ENCODE measurements at regions of chr15 and their contacts with region 1.

Region 1: GRCh38 chr15:22850055-22850454 is 11.6 kb downstream of the NIPA2 start:
- DNase-seq: no peak
- ATAC-seq: no peak
- H3K4me3 ChIP-seq: no peak overlapping the region
- H3K4me1 ChIP-seq: no peaks in the 10 kb centered on the region
- CTCF ChIP-seq: no peak

Region 2: DNA sequence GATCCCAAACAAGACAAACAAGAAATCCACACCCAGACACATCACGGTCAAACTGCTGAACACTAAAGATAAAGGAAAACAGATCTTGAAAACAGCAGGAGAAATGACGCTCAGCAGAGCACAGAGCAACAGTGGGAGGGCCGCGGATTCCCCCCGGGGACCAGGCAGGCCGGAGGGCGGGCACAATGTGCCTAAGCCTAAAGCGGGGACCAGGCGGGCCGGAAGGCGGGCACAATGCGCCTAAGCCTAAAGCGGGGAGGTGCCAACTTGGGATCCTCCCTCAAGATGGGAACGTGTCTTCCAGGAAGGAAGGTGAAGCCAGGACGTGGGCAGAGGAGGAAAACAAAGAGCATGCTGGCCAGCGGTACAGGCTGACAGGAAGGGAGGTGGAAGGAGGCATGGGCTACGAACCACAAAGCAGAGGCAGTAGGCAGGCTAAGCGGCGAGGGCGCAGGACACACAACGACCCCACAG is 99.1 kb after region 1 on chr15:
- intact Hi-C with region 1: no loop called
- DNase-seq: peak in 2 of 3 donors; percentile 57 to 61
- ATAC-seq: peak; percentile 45
- H3K4me3 ChIP-seq: no peak overlapping the region
- H3K4me1 ChIP-seq: peaks cover 12% of the 10 kb centered on the region
- CTCF ChIP-seq: no peak

Region 3: DNA sequence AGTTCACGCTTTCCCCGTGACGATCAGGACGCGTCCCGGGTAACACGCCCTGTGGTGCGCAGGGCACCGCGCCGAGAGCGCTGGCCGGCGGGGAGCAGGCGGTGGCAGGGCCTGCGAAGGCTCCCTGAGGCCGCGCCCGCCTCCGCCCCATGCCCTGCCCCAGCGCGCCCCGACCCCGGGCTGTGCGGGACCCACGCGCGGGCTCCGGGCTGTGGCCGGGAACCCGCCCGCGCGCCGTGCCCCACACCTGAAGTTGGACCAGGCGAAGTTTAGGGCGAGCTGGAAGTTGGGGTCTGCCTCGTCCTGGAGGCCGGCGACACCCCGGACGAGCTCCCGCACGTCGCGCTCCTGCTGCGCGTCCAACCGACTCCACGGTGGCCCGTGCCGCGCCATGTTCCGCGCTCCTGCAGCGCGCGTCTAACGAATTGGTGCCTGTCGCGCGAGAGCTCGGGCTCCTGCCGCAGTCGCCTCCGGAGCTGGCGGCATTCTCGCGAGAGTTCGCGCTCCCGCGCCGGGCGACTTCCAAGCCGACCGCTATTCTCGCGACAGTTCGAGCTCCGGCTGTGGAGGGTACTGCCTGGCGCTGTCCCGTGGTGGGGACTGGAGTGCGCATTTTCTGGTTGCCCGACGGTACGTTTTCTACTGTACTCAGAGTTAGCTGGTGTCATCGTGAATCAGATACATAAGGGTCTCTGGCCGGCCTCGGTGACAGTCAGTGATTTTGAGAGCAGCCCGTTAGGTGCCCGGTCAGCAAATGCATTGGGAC is 189.3 kb after region 1 on chr15 and contains the start of gene TUBGCP5:
- intact Hi-C with region 1: loop called in 1 of 2 experiments (anchors 10 kb)
- DNase-seq: peak; percentile 98 to 99 (median 99)
- ATAC-seq: peak; percentile 98
- H3K4me3 ChIP-seq: peak within 1 kb of the TSS; percentile 46
- H3K4me1 ChIP-seq: peaks cover 13% of the 10 kb centered on the region
- CTCF ChIP-seq: peak; percentile 21
- total RNA-seq, gene TUBGCP5: 11.9 to 15.3 (median 13.8) TPM

Region 4: GRCh38 chr15:23050708-23051107 is 200.7 kb after region 1 on chr15:
- intact Hi-C with region 1: no loop called
- DNase-seq: no peak
- ATAC-seq: no peak
- H3K4me3 ChIP-seq: no peak overlapping the region
- H3K4me1 ChIP-seq: no peaks in the 10 kb centered on the region
- CTCF ChIP-seq: no peak

Measured in mucosa of descending colon (tissue), 3 donors.